WTC11 (cell line): ENCODE measurements at regions of chr1 and their contacts with region 1.

Region 1: GRCh38 chr1:180178511-180179161 is 24.0 kb downstream of the QSOX1 start:
- DNase-seq: peak; percentile 83
- ATAC-seq: peak; percentile 80
- H3K4me3 Mint-ChIP-seq: no peak overlapping the region
- H3K27ac Mint-ChIP-seq: peak overlapping the region; percentile 77; the same call in 1 of the 2 replicates
- H3K4me1 Mint-ChIP-seq: no peaks in the 10 kb centered on the region
- H3K27me3 Mint-ChIP-seq: no peaks in the 10 kb centered on the region
- CTCF ChIP-seq: peak; percentile 90

Region 2: DNA sequence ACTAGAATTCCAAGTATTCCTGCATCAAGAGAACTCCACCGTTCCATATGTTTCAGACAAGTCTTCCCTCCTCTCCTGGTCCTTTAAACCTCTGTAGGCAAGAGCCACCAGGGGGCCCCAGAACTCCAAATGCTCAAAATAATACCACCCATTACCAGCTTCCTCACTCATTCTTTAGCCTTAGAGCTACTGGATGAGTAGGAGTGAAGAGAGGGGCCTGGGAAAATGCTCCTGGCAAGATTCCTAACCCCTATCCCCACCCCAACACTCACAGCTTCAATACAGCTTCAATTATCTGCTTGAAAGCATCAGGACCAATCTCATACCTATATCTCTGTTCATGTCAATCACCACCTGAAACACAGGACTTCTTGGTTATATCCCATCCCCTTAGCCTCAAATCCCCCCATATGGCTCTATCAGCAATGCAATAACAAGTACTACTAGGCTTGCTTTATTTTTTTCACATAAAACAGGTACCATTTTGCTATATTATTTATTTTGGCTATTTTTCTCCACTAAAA is 310.8 kb before region 1 on chr1:
- CTCF ChIA-PET with region 1: interaction called, 14 read pairs
- POLR2A ChIA-PET with region 1: no interaction called
- DNase-seq: peak; percentile 70
- ATAC-seq: peak; percentile 99
- H3K4me3 Mint-ChIP-seq: no peak overlapping the region
- H3K27ac Mint-ChIP-seq: 0 out of 2 replicates have a peak overlapping the region, but pooled peaks have one; percentile 18
- H3K4me1 Mint-ChIP-seq: peaks cover 4% of the 10 kb centered on the region; the same call in 1 of the 2 replicates
- H3K27me3 Mint-ChIP-seq: no peaks in the 10 kb centered on the region
- CTCF ChIP-seq: peak; percentile 45

Region 3: DNA sequence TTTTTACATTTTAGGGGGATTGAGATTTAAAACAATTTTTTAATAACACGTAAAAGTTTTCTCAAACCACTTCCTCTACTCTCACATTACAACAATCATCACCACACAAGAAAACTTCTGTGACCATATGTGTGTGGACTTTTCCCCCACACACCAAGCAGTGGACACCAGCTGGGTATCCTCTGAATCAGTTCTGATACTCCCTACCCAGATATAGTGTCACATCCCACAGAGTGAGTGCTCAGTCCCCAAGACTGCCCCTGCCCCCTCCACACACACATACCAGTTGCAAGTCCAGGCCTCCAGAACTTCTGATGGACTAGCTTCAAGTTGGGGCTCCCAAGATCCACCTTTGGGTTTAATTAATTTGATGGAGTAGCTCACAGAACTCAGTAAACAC is 77.2 kb before region 1 on chr1:
- CTCF ChIA-PET with region 1: interaction called, 19 read pairs
- POLR2A ChIA-PET with region 1: interaction called, 3 read pairs
- DNase-seq: no peak
- ATAC-seq: no peak
- H3K4me3 Mint-ChIP-seq: no peak overlapping the region
- H3K27ac Mint-ChIP-seq: no peak overlapping the region
- H3K4me1 Mint-ChIP-seq: peaks cover 17% of the 10 kb centered on the region
- H3K27me3 Mint-ChIP-seq: no peaks in the 10 kb centered on the region
- CTCF ChIP-seq: no peak

Region 4: DNA sequence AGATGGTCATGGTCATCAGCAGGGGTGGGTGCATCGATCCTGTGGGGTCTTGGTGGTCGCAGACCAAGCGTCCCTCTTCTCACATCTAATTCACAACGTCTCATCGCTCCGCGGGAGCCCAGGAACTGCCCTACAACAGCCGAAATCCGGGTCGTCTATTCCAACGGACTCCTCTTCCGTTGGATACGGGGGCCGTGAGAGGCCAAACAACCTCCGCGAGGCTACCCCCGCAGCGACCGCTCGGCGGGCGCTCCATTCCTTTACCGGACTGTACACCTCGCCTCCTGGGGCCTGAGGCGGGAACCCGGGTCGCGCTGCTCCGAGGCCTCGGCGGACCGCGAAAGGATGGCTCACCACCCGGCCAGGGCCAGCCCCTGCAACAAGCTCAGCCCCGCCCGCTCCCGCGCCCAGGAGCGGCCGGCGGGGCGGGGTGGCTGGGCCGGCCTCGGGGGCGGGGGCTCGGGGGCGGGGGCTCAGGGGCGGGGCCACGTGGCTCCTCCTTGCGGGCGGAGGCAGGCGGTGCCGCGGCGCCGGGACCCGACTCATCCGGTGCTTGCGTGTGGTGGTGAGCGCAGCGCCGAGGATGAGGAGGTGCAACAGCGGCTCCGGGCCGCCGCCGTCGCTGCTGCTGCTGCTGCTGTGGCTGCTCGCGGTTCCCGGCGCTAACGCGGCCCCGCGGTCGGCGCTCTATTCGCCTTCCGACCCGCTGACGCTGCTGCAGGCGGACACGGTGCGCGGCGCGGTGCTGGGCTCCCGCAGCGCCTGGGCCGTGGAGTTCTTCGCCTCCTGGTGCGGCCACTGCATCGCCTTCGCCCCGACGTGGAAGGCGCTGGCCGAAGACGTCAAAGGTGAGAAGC is 24.1 kb before region 1 on chr1 and contains the start of gene QSOX1:
- CTCF ChIA-PET with region 1: interaction called, 10 read pairs
- POLR2A ChIA-PET with region 1: no interaction called
- DNase-seq: peak; percentile 84
- ATAC-seq: peak; percentile 89
- H3K4me3 Mint-ChIP-seq: peak within 1 kb of the TSS; percentile 90
- H3K27ac Mint-ChIP-seq: peak within 1 kb of the TSS; percentile 58
- H3K4me1 Mint-ChIP-seq: peaks cover 28% of the 10 kb centered on the region
- H3K27me3 Mint-ChIP-seq: peaks cover 34% of the 10 kb centered on the region
- CTCF ChIP-seq: 0 out of 2 replicates have a peak, but pooled peaks have one; percentile 19
- total RNA-seq, gene QSOX1: 135 to 147 TPM (median 136 TPM) in 3 replicates